Ascending aorta (tissue), 2 donors: ENCODE measurements at regions of chr9 and their contacts with region 1.

Region 1: DNA sequence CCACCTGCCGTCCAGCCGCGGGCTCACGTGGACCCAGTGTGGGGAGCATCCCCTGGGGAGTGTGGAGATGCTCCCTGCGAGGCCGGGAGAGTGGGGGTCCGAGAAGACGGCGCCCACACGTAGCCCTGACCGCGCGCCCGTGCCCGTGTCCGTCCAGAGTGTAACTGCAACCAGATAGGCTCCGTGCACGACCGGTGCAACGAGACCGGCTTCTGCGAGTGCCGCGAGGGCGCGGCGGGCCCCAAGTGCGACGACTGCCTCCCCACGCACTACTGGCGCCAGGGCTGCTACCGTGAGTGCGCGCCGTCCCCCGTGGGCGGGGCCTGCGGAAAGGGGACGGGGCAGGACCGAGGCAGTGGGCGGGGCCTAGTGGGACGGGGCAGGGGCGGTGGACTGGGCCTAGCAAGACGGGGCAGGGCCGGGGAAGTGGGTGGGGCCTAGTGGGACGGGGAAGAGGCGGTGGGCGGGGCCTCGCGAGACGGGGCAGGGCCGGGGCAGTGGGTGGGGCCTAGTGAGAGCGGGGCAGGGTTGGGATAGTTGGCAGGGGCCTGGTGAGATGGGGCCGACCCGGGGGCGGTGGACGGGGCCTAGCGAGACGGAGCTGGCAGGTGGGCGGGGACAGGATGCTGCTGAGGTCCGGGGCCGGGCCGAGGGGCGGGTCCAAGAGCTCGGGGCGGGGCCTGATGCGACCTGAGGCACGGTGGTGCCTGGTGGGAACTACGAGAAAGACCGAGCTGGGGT is 79.1 kb downstream of the NTNG2 start:
- DNase-seq: peak; percentile 95 to 98
- H3K4me3 ChIP-seq: peak overlapping the region; percentile 82 to 83
- H3K27ac ChIP-seq: peak overlapping the region in 1 of 2 donors; percentile 43
- H3K4me1 ChIP-seq: peaks cover 5 to 10% of the 10 kb centered on the region in 2 donors
- H3K27me3 ChIP-seq: no peaks in the 10 kb centered on the region
- CTCF ChIP-seq: no peak

Region 2: GRCh38 chr9:131762356-131762932 is 478.5 kb before region 1 on chr9:
- intact Hi-C with region 1: loop called (anchors 1 kb)
- DNase-seq: peak in 1 of 2 donors; percentile 79
- H3K4me3 ChIP-seq: peak overlapping the region in 1 of 2 donors; percentile 28
- H3K27ac ChIP-seq: no peak overlapping the region
- H3K4me1 ChIP-seq: peaks cover 0 to 4% of the 10 kb centered on the region in 2 donors
- H3K27me3 ChIP-seq: no peaks in the 10 kb centered on the region
- CTCF ChIP-seq: peak; percentile 91 to 97 (median 95)

Region 3: GRCh38 chr9:132079391-132080091 is 161.4 kb before region 1 on chr9 and contains the start of gene MED27:
- intact Hi-C with region 1: loop called (anchors 5 kb)
- DNase-seq: peak; percentile 68 to 96
- H3K4me3 ChIP-seq: peak within 1 kb of the TSS; percentile 86 to 92
- H3K27ac ChIP-seq: peak within 1 kb of the TSS; percentile 62 to 75
- H3K4me1 ChIP-seq: peaks cover 0 to 35% of the 10 kb centered on the region in 2 donors
- H3K27me3 ChIP-seq: no peaks in the 10 kb centered on the region
- CTCF ChIP-seq: no peak
- total RNA-seq, gene MED27: 19.4 TPM

Region 4: DNA sequence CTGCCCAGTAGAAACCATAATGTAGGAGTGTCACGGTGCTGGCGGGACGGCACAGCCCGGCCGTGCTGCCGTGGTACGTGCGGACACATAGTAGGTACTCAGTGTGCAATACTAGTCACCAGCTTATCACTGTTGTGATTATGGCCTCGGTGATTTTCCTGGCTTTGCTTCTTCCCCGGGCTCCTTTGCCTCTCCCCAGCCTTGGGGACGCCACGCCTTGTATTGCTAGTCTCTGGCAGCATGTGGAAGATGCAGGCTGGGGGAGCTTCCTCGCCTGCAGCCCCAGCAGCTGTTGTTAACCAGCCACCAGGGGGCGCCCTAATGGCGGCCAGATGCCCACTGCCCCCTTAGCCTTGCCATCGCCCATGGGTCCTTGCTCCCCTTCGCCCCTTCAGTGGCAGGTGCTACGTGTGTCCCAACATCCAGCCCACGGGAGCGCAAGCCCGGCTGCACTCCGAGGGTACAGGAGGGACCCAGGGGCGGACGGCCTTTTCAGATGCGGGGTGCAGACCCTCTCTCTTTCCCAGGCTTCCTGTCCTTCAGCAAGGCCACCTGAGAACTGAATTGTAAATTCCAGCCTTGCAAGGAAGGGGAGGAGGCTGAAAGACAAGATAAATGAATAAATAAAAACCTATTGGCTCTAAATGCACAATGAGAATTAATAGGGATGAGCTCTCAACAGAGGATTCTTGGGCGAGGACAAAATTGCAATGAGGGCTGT is 71.1 kb before region 1 on chr9:
- intact Hi-C with region 1: loop called (anchors 5 kb)
- DNase-seq: no peak
- H3K4me3 ChIP-seq: no peak overlapping the region
- H3K27ac ChIP-seq: no peak overlapping the region
- H3K4me1 ChIP-seq: peaks cover under 1% of the 10 kb centered on the region in 2 donors
- H3K27me3 ChIP-seq: peaks cover 7% of the 10 kb centered on the region
- CTCF ChIP-seq: peak; percentile 36 to 64 (median 43)